ENCODE measurements at regions of chr3 and their contacts with region 1.

Region 1: GRCh38 chr3:124467980-124468902 is 262.0 kb upstream of the UMPS start:
- DNase-seq: no peak
- H3K4me3 ChIP-seq: no peak overlapping the region
- H3K27ac ChIP-seq: peak overlapping the region in 1 of 2 donors; percentile 62
- H3K4me1 ChIP-seq: peaks cover 0 to 2% of the 10 kb centered on the region in 2 donors
- H3K27me3 ChIP-seq: no peaks in the 10 kb centered on the region
- CTCF ChIP-seq: peak; percentile 86 to 94 (median 93)

Region 2: DNA sequence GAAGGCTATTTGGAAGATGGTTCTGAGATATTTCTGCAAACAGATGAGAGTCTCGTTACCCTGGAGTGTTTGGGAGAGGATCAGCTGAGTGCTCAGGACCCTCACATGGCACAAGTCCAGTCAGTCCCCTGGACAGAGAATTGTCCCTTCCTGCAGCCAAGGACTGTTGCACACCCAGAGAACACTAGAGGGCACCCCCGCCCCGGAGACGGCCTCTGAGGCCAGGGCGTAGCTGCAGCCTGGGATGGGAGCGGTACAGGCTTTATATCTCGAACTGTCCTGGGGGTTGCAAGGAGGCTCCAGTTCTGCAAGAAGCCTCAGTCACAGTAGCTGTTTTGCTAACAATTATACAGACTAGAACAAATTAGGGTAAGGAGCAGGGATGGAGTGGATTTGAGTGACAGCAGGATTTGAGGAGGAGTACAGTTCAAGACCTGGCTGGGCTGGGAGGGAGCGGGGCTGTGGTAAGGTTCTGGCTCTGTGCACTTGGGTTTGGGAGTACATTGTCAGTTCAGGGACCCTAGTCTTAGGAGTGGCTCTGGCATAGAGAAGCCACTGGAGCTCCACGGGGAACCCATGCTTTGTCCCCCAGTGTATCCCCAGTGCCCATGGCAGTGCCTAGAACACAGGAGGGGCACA is 815.8 kb before region 1 on chr3:
- intact Hi-C with region 1: no loop called
- DNase-seq: peak in 1 of 2 donors; percentile 87
- H3K4me3 ChIP-seq: no peak overlapping the region
- H3K27ac ChIP-seq: peak overlapping the region; percentile 85 to 96
- H3K4me1 ChIP-seq: peaks cover 18 to 54% of the 10 kb centered on the region in 2 donors
- H3K27me3 ChIP-seq: no peaks in the 10 kb centered on the region
- CTCF ChIP-seq: peak; percentile 81 to 93 (median 89)

Region 3: DNA sequence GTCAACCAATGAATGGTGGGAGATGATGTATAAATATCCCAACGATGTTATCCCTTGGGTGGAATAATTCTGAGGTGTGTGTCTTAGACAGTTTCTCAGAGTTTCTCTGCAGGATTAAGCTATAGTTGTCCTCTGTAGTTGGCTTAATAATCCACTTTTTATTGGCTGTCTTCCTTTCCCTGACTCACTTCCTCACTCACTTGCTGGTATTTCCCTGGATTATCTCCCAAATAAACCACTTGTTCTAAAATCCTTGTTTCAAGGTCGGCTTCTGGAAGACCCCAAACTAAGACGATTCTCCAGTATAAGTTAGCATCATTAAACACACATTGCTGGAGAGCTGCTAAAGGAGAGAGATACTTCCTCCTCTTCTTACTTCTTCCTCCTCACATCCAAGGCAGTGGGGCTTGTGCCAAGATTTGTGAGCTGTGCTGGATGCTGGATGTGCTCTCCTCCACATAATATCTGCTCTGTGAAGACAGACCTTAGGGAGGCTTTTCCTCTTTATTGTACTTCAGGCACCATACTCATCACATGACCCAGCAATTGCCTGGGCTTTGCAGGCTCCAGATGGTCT is 453.8 kb before region 1 on chr3:
- intact Hi-C with region 1: loop called (anchors 1 kb)
- DNase-seq: peak in 1 of 2 donors; percentile 74
- H3K4me3 ChIP-seq: no peak overlapping the region
- H3K27ac ChIP-seq: peak overlapping the region; percentile 83 to 86
- H3K4me1 ChIP-seq: peaks cover 0 to 37% of the 10 kb centered on the region in 2 donors
- H3K27me3 ChIP-seq: no peaks in the 10 kb centered on the region
- CTCF ChIP-seq: no peak

Region 4: DNA sequence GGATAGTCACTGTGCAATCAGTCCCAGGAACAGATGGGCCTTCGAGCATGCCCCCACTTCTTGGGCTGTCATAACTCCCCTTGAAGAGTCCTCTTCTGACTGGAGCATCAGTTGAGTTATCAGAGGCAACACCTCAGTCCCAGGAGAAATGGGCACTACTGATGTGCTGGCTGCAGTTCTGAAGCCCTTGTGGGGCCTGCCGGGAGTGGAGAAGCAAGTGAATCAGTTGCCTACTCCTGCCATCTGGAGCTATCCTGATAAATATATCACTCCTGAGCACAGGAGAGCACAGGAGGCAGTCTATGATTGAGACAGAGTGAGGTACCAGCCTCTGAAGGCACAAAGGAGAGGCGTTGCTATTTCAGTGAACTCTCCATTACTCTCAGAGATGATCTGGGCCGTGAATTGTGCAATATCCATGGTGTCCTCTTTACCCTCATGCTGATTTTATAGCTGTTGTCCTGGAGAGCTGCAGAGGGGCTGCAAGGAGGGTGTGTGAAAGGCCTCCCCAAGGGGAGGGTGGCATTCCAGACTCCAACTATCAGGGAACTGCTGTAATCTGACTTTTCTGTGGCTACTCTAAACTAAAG is 132.1 kb before region 1 on chr3:
- intact Hi-C with region 1: no loop called
- DNase-seq: no peak
- H3K4me3 ChIP-seq: no peak overlapping the region
- H3K27ac ChIP-seq: no peak overlapping the region
- H3K4me1 ChIP-seq: no peaks in the 10 kb centered on the region
- H3K27me3 ChIP-seq: no peaks in the 10 kb centered on the region
- CTCF ChIP-seq: no peak

Region 5: DNA sequence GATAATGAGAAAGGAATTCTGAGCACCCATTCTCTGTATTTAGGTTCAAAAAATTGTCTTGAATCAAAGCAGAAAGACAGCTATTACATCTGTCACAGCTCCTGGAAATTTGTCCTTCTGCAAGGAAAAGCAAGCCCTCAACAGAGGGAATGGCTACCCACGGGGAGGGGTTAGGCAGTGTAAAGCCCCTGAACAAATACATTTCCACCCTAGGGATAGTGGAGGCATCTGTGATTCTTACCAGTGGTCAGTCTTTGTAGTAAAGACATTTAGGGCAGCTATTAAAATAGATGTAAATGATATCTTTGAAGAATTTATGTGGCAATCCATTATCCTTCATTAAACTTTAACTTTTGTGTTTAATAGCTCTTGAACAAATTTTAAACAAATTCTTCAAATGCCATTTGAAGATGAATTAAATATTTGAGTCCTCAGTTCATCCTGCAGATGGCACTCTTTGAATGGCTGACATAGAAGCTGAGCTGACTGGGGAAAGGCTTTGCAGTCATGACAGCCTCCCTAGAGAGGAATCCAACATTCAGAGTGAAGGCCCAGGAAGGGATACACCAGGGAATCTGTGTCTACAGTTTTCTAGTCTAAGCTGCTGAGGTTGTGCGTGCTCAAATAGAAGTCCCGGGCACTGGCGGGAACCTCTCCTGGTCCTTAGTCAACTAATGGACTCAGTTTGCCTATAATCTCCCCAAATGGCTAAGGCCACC is 116.7 kb before region 1 on chr3:
- intact Hi-C with region 1: loop called (anchors 1 kb)
- DNase-seq: no peak
- H3K4me3 ChIP-seq: no peak overlapping the region
- H3K27ac ChIP-seq: peak overlapping the region in 1 of 2 donors; percentile 51
- H3K4me1 ChIP-seq: peaks cover 0 to 6% of the 10 kb centered on the region in 2 donors
- H3K27me3 ChIP-seq: no peaks in the 10 kb centered on the region
- CTCF ChIP-seq: peak; percentile 38 to 50 (median 45)

Region 6: DNA sequence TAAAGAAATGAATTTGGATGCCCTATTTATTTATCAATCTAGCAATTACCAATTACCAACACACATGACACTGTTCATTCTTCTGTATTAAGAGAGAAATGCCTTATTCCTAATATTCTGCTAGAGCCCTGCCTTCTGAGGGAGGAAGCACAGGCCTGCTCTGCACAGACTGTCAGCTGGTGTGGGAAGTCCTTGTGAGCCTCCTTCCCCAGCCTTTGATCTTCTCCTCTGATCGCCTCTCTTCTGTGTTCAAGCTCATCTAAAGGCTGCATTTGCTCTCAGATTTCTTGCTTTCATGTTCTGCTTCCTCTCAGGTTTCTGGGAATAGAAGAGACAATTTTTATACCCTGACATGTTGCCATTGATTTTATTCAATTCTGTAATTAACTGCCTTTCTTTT is 28.6 kb before region 1 on chr3:
- intact Hi-C with region 1: no loop called
- DNase-seq: no peak
- H3K4me3 ChIP-seq: no peak overlapping the region
- H3K27ac ChIP-seq: no peak overlapping the region
- H3K4me1 ChIP-seq: no peaks in the 10 kb centered on the region
- H3K27me3 ChIP-seq: no peaks in the 10 kb centered on the region
- CTCF ChIP-seq: no peak